ENCODE measurements at regions of chr4 and their contacts with region 1.

Region 1: DNA sequence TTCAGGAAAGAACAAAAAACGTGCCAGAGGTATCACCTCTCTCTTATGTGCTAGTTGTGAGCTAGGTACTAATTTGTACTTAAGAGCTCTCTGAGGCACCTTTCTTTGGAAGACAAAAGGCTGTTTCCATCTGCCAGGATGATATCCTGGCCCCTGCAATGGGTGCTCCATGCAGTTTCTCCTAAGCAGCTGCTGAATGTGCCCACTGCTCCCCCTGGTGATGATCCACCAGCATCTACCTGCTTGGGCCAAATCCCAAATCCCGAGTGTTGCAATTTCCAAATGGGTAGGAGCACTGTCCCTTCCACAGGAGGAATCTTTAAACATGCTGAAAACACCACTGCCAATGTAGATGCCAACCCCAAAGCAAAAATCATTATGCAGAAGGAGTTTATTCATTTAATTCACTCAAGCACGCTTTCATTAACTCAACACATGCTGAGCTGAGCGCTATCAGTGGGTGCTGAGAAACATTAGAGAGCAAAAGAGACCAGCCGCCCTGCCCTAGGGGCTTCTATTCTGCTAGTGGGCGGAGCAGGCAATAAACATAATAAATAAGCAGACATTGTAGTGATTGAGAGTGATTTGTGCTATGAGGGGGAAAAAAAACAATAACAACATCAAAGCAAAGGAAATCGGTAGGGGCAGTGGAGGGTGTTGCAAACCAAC is 69.6 kb upstream of the C4orf50 start:
- DNase-seq: peak; percentile 70 to 72
- H3K4me3 ChIP-seq: no peak overlapping the region
- H3K27ac ChIP-seq: no peak overlapping the region
- H3K4me1 ChIP-seq: no peaks in the 10 kb centered on the region
- H3K27me3 ChIP-seq: peaks cover 0 to 21% (median 0%) of the 10 kb centered on the region in 3 donors
- CTCF ChIP-seq: peak in 5 of 7 experiments; percentile 30 to 81 (median 59)
- EP300 ChIP-seq: no peak
- POLR2A ChIP-seq: no peak

Region 2: GRCh38 chr4:6008092-6008551 is 79.7 kb before region 1 on chr4:
- intact Hi-C with region 1: loop called (anchors 10 kb)
- DNase-seq: no peak
- H3K4me3 ChIP-seq: no peak overlapping the region
- H3K27ac ChIP-seq: no peak overlapping the region
- H3K4me1 ChIP-seq: peaks cover 0 to 16% (median 5%) of the 10 kb centered on the region in 4 donors
- H3K27me3 ChIP-seq: peaks cover 5 to 51% (median 24%) of the 10 kb centered on the region in 3 donors
- CTCF ChIP-seq: peak in 1 of 7 experiments; percentile 8
- EP300 ChIP-seq: no peak
- POLR2A ChIP-seq: no peak